ENCODE measurements at regions of chr20 and their contacts with region 1.

Region 1: GRCh38 chr20:50153485-50154377 is at the start of gene PEDS1:
- H3K4me3 Mint-ChIP-seq: peak within 1 kb of the TSS; percentile 85
- H3K27ac Mint-ChIP-seq: peak within 1 kb of the TSS; percentile 97
- H3K4me1 Mint-ChIP-seq: peaks cover 54% of the 10 kb centered on the region
- H3K27me3 Mint-ChIP-seq: no peaks in the 10 kb centered on the region

Region 2: GRCh38 chr20:50112512-50113353 is 41.0 kb before region 1 on chr20 and contains the start of gene UBE2V1:
- intact Hi-C with region 1: loop called (anchors 5 kb)
- H3K4me3 Mint-ChIP-seq: peak within 1 kb of the TSS; percentile 96
- H3K27ac Mint-ChIP-seq: peak within 1 kb of the TSS; percentile 86
- H3K4me1 Mint-ChIP-seq: peaks cover 77% of the 10 kb centered on the region
- H3K27me3 Mint-ChIP-seq: no peaks in the 10 kb centered on the region

Region 3: GRCh38 chr20:50165684-50166554 is 12.2 kb after region 1 on chr20:
- intact Hi-C with region 1: loop called (anchors 2 kb)
- H3K4me3 Mint-ChIP-seq: peak overlapping the region; percentile 72
- H3K27ac Mint-ChIP-seq: peak overlapping the region; percentile 97
- H3K4me1 Mint-ChIP-seq: peaks cover 32% of the 10 kb centered on the region
- H3K27me3 Mint-ChIP-seq: peaks cover 3% of the 10 kb centered on the region